ENCODE measurements at regions of chr5 and their contacts with region 1.

Region 1: DNA sequence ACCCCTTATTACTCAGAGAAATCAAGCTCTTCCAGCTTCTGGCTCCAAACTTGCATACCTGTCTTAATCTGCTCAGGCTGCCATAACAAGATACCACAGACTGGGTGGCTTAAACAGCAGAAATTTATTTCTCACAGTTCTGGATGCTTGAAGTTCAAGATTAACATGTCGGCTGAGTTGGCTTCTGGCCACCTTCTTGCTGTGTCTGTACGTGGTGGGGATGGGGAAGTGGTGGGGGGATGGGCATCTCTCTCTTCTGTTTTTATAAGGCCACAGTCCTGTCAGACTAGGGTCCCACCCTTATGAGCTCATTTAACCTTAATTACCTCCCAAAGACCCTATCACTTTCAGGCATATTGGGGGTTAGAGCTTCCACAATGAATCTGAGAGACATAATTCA is 140.5 kb downstream of the SV2C start:
- DNase-seq: no peak
- ATAC-seq: no peak
- H3K4me3 Mint-ChIP-seq: no peak overlapping the region
- H3K27ac Mint-ChIP-seq: no peak overlapping the region
- H3K4me1 Mint-ChIP-seq: peaks cover 8% of the 10 kb centered on the region
- H3K27me3 Mint-ChIP-seq: no peaks in the 10 kb centered on the region
- CTCF ChIP-seq: no peak

Region 2: GRCh38 chr5:76234665-76235064 is 11.0 kb after region 1 on chr5:
- CTCF ChIA-PET with region 1: interaction called, 4 read pairs
- POLR2A ChIA-PET with region 1: interaction called, 12 read pairs
- DNase-seq: no peak
- ATAC-seq: no peak
- H3K4me3 Mint-ChIP-seq: no peak overlapping the region
- H3K27ac Mint-ChIP-seq: no peak overlapping the region
- H3K4me1 Mint-ChIP-seq: no peaks in the 10 kb centered on the region; the same call in 1 of the 2 replicates
- H3K27me3 Mint-ChIP-seq: no peaks in the 10 kb centered on the region; the same call in 1 of the 2 replicates
- CTCF ChIP-seq: no peak